IMR-90 (cell line): ENCODE measurements at regions of chr6 and their contacts with region 1.

Region 1: GRCh38 chr6:31546962-31547726 is at the start of gene NFKBIL1:
- DNase-seq: peak; percentile 98
- ATAC-seq: peak; percentile 81
- H3K4me3 ChIP-seq: peak within 1 kb of the TSS; percentile 45
- H3K27ac ChIP-seq: peak within 1 kb of the TSS; percentile 74
- H3K4me1 ChIP-seq: peaks cover 6% of the 10 kb centered on the region
- H3K27me3 ChIP-seq: no peaks in the 10 kb centered on the region
- CTCF ChIP-seq: no peak
- POLR2A ChIP-seq: peak; percentile 87
- RAD21 ChIP-seq: no peak
- total RNA-seq, gene NFKBIL1: 10.0 and 10.8 TPM in 2 replicates

Region 2: DNA sequence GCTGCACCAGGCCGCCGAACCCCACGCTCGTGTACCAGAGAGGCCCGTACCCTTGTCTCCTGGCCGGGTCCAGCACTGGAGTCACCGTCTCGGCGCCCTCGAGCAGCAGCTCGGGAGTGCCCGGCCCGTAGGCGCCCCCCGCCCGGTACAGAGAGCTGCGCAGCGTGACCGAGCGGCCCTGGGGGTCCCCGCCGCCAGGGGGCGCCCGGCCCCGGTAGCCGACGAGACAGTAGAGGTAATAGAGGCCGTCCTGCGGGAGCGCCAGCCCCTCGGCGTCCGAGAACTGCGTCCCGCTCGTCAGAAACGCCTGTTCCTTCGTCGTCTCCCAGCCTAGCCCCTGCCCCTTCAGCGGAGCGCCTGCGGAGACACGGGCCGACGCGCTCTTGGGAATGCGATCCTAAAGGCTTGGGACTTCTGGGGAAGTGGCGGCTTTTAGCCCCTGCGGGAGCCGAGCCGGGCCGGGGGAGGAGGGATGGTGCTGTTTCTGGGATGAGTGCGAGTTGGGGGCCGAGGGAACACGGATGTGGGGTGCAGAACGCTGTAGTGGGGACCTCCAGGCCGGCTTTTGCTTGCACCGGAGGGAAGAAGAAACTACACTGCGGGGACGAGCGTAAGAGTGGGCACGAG is 33.8 kb after region 1 on chr6:
- CTCF ChIA-PET with region 1: interaction called, 8 read pairs
- POLR2A ChIA-PET with region 1: interaction called, 3 read pairs
- dilution Hi-C with region 1: no loop called
- in situ Hi-C with region 1: no loop called
- intact Hi-C with region 1: loop called (anchors 5 kb)
- DNase-seq: peak; percentile 71
- ATAC-seq: peak; percentile 99
- H3K4me3 ChIP-seq: peak overlapping the region; percentile 82
- H3K27ac ChIP-seq: peak overlapping the region; percentile 58; the same call in 1 of the 2 replicates
- H3K4me1 ChIP-seq: peaks cover 4% of the 10 kb centered on the region; the same call in 1 of the 2 replicates
- H3K27me3 ChIP-seq: peaks cover 12% of the 10 kb centered on the region
- CTCF ChIP-seq: peak; percentile 93
- POLR2A ChIP-seq: no peak
- RAD21 ChIP-seq: peak; percentile 60

Region 3: GRCh38 chr6:31652925-31653718 is 106.0 kb after region 1 on chr6:
- CTCF ChIA-PET with region 1: interaction called, 4 read pairs
- POLR2A ChIA-PET with region 1: interaction called, 10 read pairs
- dilution Hi-C with region 1: no loop called
- in situ Hi-C with region 1: no loop called
- intact Hi-C with region 1: no loop called
- DNase-seq: no peak
- ATAC-seq: peak; percentile 75
- H3K4me3 ChIP-seq: peak overlapping the region; percentile 59
- H3K27ac ChIP-seq: peak overlapping the region; percentile 88
- H3K4me1 ChIP-seq: 0 out of 2 replicates have a peak, but pooled peaks cover 3% of the 10 kb centered on the region
- H3K27me3 ChIP-seq: no peaks in the 10 kb centered on the region
- CTCF ChIP-seq: no peak
- POLR2A ChIP-seq: no peak; the same call in 1 of the 2 replicates
- RAD21 ChIP-seq: no peak

Region 4: GRCh38 chr6:31739639-31740396 is 192.7 kb after region 1 on chr6 and contains the start of gene MSH5:
- CTCF ChIA-PET with region 1: interaction called, 10 read pairs
- POLR2A ChIA-PET with region 1: no interaction called
- dilution Hi-C with region 1: no loop called
- in situ Hi-C with region 1: no loop called
- intact Hi-C with region 1: no loop called
- DNase-seq: peak; percentile 99
- ATAC-seq: peak; percentile 88
- H3K4me3 ChIP-seq: peak within 1 kb of the TSS; percentile 73
- H3K27ac ChIP-seq: peak within 1 kb of the TSS; percentile 68; the same call in 1 of the 2 replicates
- H3K4me1 ChIP-seq: peaks cover 13% of the 10 kb centered on the region
- H3K27me3 ChIP-seq: no peaks in the 10 kb centered on the region
- CTCF ChIP-seq: no peak
- POLR2A ChIP-seq: no peak
- RAD21 ChIP-seq: no peak
- total RNA-seq, gene MSH5: 4.7 and 5.6 TPM in 2 replicates

Region 5: DNA sequence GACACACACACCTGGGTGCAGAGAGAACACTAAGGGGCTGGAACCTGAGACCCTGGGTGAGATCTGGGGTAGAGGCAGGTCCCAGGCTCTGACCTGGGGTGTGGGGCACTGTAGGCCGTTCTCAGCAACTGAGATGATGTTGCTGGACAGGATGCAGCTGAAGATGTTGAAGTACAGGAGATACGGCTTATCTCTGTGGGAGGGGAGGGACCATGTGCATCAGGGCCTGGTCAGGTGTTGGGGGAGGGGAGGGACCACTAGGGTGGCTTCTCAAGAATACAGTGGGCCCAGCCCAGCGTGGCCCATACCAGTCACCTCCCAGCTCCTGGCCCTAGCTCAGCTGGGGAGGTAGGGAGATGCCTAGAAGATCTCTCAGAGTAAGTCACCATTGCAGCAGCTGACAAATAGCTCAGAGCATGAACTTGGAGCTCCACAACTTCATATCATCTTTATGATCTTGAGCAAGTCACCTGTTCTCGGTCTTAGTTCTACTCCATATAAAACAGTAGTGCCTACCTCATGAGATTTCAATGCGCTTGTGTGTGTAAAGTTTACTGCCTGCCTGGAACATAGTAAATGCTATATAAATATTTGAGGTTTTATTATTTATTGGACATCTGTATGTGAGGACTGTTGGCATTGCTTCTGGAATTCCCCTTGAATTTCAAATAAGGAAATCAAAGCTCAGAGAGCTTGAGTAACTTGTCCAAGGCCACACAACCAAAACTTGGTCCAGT is 327.9 kb after region 1 on chr6:
- CTCF ChIA-PET with region 1: no interaction called
- POLR2A ChIA-PET with region 1: interaction called, 13 read pairs
- dilution Hi-C with region 1: no loop called
- in situ Hi-C with region 1: no loop called
- intact Hi-C with region 1: no loop called
- DNase-seq: peak; percentile 66
- ATAC-seq: peak; percentile 57
- H3K4me3 ChIP-seq: no peak overlapping the region
- H3K27ac ChIP-seq: no peak overlapping the region
- H3K4me1 ChIP-seq: peaks cover 14% of the 10 kb centered on the region
- H3K27me3 ChIP-seq: no peaks in the 10 kb centered on the region
- CTCF ChIP-seq: no peak
- POLR2A ChIP-seq: no peak
- RAD21 ChIP-seq: no peak